ENCODE measurements at regions of chr1 and their contacts with region 1.

Region 1: GRCh38 chr1:177913762-177914540 is 55.9 kb downstream of the SEC16B start:
- DNase-seq: peak; percentile 63
- ATAC-seq: peak; percentile 92
- H3K4me3 ChIP-seq: no peak overlapping the region
- H3K27ac ChIP-seq: no peak overlapping the region
- H3K4me1 ChIP-seq: peaks cover 5% of the 10 kb centered on the region; the same call in 1 of the 2 replicates
- H3K27me3 ChIP-seq: no peaks in the 10 kb centered on the region; the same call in 1 of the 2 replicates
- CTCF ChIP-seq: peak; percentile 67
- POLR2A ChIP-seq: no peak
- RAD21 ChIP-seq: peak; percentile 77

Region 2: GRCh38 chr1:177780096-177780700 is 133.8 kb before region 1 on chr1:
- CTCF ChIA-PET with region 1: no interaction called
- POLR2A ChIA-PET with region 1: no interaction called
- dilution Hi-C with region 1: no loop called
- in situ Hi-C with region 1: no loop called
- intact Hi-C with region 1: loop called (anchors 1 kb)
- DNase-seq: peak; percentile 57
- ATAC-seq: peak; percentile 74
- H3K4me3 ChIP-seq: no peak overlapping the region
- H3K27ac ChIP-seq: no peak overlapping the region
- H3K4me1 ChIP-seq: no peaks in the 10 kb centered on the region
- H3K27me3 ChIP-seq: no peaks in the 10 kb centered on the region
- CTCF ChIP-seq: peak; percentile 48
- POLR2A ChIP-seq: no peak
- RAD21 ChIP-seq: peak; percentile 47

Measured in IMR-90 (cell line).